Body of pancreas (tissue), 4 donors: ENCODE measurements at regions of chr6 and their contacts with region 1.

Region 1: GRCh38 chr6:44151348-44152108 is 7.1 kb upstream of the CAPN11 start:
- DNase-seq: peak; percentile 78 to 84 (median 80)
- ATAC-seq: peak; percentile 68
- H3K4me3 ChIP-seq: no peak overlapping the region
- H3K27ac ChIP-seq: no peak overlapping the region
- H3K4me1 ChIP-seq: peaks cover 25% of the 10 kb centered on the region
- H3K27me3 ChIP-seq: no peaks in the 10 kb centered on the region
- CTCF ChIP-seq: peak; percentile 97 to 99 (median 99)
- POLR2A ChIP-seq: no peak

Region 2: DNA sequence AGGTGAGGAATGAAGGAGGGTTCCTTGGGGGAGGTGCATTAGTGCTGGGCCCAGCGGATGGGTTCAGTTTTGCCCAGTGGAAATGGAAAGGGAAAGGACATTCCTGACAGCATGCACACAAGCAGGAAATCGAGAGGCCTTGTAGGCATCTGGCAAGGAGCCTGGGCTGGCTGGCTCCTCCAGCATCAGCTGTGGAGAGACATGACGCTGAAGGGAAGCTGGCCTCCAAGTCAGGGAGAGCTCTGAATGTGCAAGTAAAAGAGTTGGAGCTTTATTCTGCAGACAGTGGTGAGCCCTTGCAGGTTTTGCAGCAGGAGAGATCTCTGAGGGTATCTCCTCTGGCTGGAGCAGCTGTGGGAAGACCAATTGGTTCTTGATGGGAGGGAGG is 178.6 kb before region 1 on chr6:
- intact Hi-C with region 1: no loop called
- DNase-seq: peak; percentile 84 to 91 (median 87)
- ATAC-seq: peak; percentile 75
- H3K4me3 ChIP-seq: no peak overlapping the region
- H3K27ac ChIP-seq: peak overlapping the region; percentile 86 to 94 (median 89)
- H3K4me1 ChIP-seq: peaks cover 53% of the 10 kb centered on the region
- H3K27me3 ChIP-seq: no peaks in the 10 kb centered on the region
- CTCF ChIP-seq: no peak
- POLR2A ChIP-seq: no peak

Region 3: DNA sequence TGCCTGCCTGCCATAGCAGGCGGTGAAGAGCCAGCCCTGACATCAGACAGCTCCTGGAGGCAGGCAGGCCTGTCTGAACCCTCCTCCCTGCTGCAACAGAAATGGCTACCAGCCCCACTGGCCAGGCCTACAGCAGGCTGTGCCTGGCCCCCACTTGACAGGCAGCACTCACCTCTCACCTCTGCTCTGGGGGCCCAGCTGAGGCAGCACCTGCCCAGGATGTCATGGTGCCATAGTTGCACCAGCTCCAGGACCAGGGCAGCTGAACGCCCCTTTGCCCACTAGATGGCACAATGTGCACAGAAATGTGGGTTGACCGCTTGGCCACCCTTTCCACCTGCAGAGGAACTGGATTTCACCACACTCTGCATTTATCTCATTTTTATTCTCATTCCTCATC is 54.9 kb before region 1 on chr6:
- intact Hi-C with region 1: loop called (anchors 5 kb)
- DNase-seq: peak; percentile 83 to 88 (median 84)
- ATAC-seq: peak; percentile 89
- H3K4me3 ChIP-seq: no peak overlapping the region
- H3K27ac ChIP-seq: no peak overlapping the region
- H3K4me1 ChIP-seq: peaks cover 16% of the 10 kb centered on the region
- H3K27me3 ChIP-seq: no peaks in the 10 kb centered on the region
- CTCF ChIP-seq: peak; percentile 65 to 93 (median 90)
- POLR2A ChIP-seq: no peak

Region 4: DNA sequence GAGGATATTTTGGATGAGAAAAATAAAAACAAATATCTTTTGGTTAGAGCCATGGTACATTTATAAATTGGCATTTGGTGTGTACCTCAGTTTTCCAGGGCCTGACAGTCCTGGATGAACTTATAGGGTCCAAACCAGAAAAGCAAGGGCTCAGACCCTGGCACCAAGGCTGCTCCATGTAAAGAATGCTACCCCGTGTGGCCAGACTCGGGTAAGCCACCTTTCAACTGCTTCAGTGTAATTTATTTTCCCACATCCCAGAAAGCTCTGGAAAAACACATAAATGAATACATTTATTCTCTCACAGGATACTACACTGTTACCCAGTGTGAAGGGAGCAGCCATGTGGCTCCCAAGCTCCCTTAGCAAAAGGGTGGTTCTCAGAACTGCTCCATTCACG is 38.1 kb before region 1 on chr6:
- intact Hi-C with region 1: loop called (anchors 5 kb)
- DNase-seq: no peak
- ATAC-seq: no peak
- H3K4me3 ChIP-seq: no peak overlapping the region
- H3K27ac ChIP-seq: no peak overlapping the region
- H3K4me1 ChIP-seq: peaks cover 22% of the 10 kb centered on the region
- H3K27me3 ChIP-seq: no peaks in the 10 kb centered on the region
- CTCF ChIP-seq: no peak
- POLR2A ChIP-seq: no peak